Dendritic cell treated with granulocyte-macrophage colony-stimulating factor and Interleukin-4, amounts not matched to agents 40 ng/mL and 50 ng/mL, for 4 days (primary cell): ENCODE measurements at regions of chr9 and their contacts with region 1.

Region 1: GRCh38 chr9:34665381-34666250 is 3.2 kb upstream of the CCL27 start:
- H3K4me3 Mint-ChIP-seq: peak overlapping the region; percentile 81
- H3K27ac Mint-ChIP-seq: peak overlapping the region; percentile 91
- H3K4me1 Mint-ChIP-seq: peaks cover 35% of the 10 kb centered on the region
- H3K27me3 Mint-ChIP-seq: no peaks in the 10 kb centered on the region

Region 2: GRCh38 chr9:34620061-34620994 is 45.3 kb before region 1 on chr9 and contains the start of gene DCTN3:
- intact Hi-C with region 1: no loop called
- H3K4me3 Mint-ChIP-seq: peak within 1 kb of the TSS; percentile 95
- H3K27ac Mint-ChIP-seq: peak within 1 kb of the TSS; percentile 89
- H3K4me1 Mint-ChIP-seq: peaks cover 29% of the 10 kb centered on the region
- H3K27me3 Mint-ChIP-seq: peaks cover 45% of the 10 kb centered on the region

Region 3: GRCh38 chr9:34637356-34638137 is 28.1 kb before region 1 on chr9 and contains the start of gene SIGMAR1:
- intact Hi-C with region 1: loop called (anchors 1 kb)
- H3K4me3 Mint-ChIP-seq: peak within 1 kb of the TSS; percentile 91
- H3K27ac Mint-ChIP-seq: peak within 1 kb of the TSS; percentile 98
- H3K4me1 Mint-ChIP-seq: peaks cover 39% of the 10 kb centered on the region
- H3K27me3 Mint-ChIP-seq: peaks cover 2% of the 10 kb centered on the region

Region 4: GRCh38 chr9:34646211-34647083 is 19.2 kb before region 1 on chr9 and contains the start of gene GALT:
- intact Hi-C with region 1: loop called (anchors 1 kb)
- H3K4me3 Mint-ChIP-seq: peak within 1 kb of the TSS; percentile 83
- H3K27ac Mint-ChIP-seq: peak within 1 kb of the TSS; percentile 87
- H3K4me1 Mint-ChIP-seq: peaks cover 28% of the 10 kb centered on the region
- H3K27me3 Mint-ChIP-seq: no peaks in the 10 kb centered on the region

Region 5: DNA sequence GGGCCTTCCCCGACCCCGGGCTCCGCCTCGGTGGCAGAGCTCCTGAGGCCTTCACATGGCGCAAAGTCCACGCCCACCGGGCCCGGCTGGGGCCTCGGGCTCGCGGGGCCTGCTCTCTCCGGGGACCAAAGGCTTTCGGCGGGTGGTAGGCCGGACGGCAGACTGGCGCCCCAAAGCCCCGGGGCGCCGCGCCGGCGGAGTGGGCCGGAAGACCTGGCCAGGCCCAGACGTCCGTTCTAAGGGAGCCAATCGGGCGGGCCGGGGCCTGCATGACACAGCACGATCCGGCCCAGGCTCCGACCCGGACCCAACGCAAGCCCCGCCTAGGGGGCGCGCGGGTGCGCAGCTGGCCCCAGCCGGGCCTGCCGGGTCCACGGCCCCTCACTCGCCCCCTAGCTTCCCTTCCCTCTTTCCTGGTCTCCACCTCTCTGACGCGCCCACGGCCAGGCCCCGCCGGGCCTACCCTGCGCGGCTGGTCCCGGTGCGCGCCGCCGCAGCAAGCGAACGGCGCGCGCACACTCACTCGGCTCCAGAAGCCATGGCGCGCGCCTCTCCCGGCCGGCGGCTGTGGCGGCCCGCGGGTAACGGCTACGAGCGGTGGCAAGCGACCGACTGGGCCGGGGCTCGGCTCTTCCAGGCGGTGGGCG is 406.3 kb after region 1 on chr9:
- intact Hi-C with region 1: loop called (anchors 5 kb)
- H3K4me3 Mint-ChIP-seq: peak overlapping the region; percentile 82
- H3K27ac Mint-ChIP-seq: peak overlapping the region; percentile 96
- H3K4me1 Mint-ChIP-seq: peaks cover 36% of the 10 kb centered on the region
- H3K27me3 Mint-ChIP-seq: no peaks in the 10 kb centered on the region